Mammary epithelial cell (primary cell): ENCODE measurements at regions of chrX and their contacts with region 1.

Region 1: GRCh38 chrX:30889147-30890140 is at the start of gene TAB3:
- DNase-seq: peak; percentile 96
- H3K4me3 ChIP-seq: peak within 1 kb of the TSS; percentile 52 to 67 (median 65)
- H3K27ac ChIP-seq: peak within 1 kb of the TSS; percentile 83
- H3K4me1 ChIP-seq: peaks cover 39% of the 10 kb centered on the region
- H3K27me3 ChIP-seq: no peaks in the 10 kb centered on the region
- CTCF ChIP-seq: no peak
- total RNA-seq, gene TAB3: 34.1 to 55.5 TPM

Region 2: DNA sequence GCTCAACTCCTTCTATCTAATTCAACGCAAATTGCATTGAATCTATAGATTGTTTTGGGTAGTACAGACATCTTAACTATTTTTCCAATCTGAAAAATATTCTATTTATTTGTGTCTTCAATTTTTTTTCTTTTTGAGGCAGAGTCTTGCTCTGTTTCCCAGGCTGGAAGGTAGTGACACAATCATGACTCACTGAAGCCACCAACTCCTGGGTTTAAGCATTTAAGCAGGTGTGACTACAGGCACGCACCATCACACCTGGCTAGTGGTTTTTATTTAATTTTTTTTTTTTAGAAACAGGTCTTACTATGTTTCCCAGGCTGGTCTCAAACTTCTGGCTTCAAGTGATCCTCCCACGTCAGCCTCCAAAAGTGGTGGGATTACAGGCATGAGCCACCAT is 137.9 kb before region 1 on chrX:
- CTCF ChIA-PET with region 1: no interaction called
- dilution Hi-C with region 1: no loop called
- in situ Hi-C with region 1: no loop called
- intact Hi-C with region 1: loop called (anchors 1 kb)
- DNase-seq: peak; percentile 62
- H3K4me3 ChIP-seq: no peak overlapping the region
- H3K27ac ChIP-seq: no peak overlapping the region
- H3K4me1 ChIP-seq: no peaks in the 10 kb centered on the region
- H3K27me3 ChIP-seq: no peaks in the 10 kb centered on the region
- CTCF ChIP-seq: no peak

Region 3: GRCh38 chrX:30875961-30876360 is 13.5 kb before region 1 on chrX:
- CTCF ChIA-PET with region 1: no interaction called
- dilution Hi-C with region 1: no loop called
- in situ Hi-C with region 1: no loop called
- intact Hi-C with region 1: loop called (anchors 1 kb)
- DNase-seq: peak; percentile 90
- H3K4me3 ChIP-seq: peak overlapping the region in 1 of 3 experiments; percentile 10
- H3K27ac ChIP-seq: peak overlapping the region; percentile 96
- H3K4me1 ChIP-seq: peaks cover 32% of the 10 kb centered on the region
- H3K27me3 ChIP-seq: no peaks in the 10 kb centered on the region
- CTCF ChIP-seq: no peak

Region 4: GRCh38 chrX:30906726-30907125 is 17.3 kb after region 1 on chrX:
- CTCF ChIA-PET with region 1: no interaction called
- dilution Hi-C with region 1: no loop called
- in situ Hi-C with region 1: no loop called
- intact Hi-C with region 1: loop called (anchors 2 kb)
- DNase-seq: peak; percentile 82
- H3K4me3 ChIP-seq: no peak overlapping the region
- H3K27ac ChIP-seq: peak overlapping the region; percentile 52
- H3K4me1 ChIP-seq: peaks cover 33% of the 10 kb centered on the region
- H3K27me3 ChIP-seq: no peaks in the 10 kb centered on the region
- CTCF ChIP-seq: no peak

Region 5: GRCh38 chrX:30935985-30936384 is 46.5 kb after region 1 on chrX:
- CTCF ChIA-PET with region 1: no interaction called
- dilution Hi-C with region 1: no loop called
- in situ Hi-C with region 1: no loop called
- intact Hi-C with region 1: loop called (anchors 2 kb)
- DNase-seq: peak; percentile 19
- H3K4me3 ChIP-seq: no peak overlapping the region
- H3K27ac ChIP-seq: no peak overlapping the region
- H3K4me1 ChIP-seq: no peaks in the 10 kb centered on the region
- H3K27me3 ChIP-seq: no peaks in the 10 kb centered on the region
- CTCF ChIP-seq: peak; percentile 30 to 48

Region 6: GRCh38 chrX:30957753-30958152 is 68.3 kb after region 1 on chrX:
- CTCF ChIA-PET with region 1: no interaction called
- dilution Hi-C with region 1: no loop called
- in situ Hi-C with region 1: no loop called
- intact Hi-C with region 1: loop called (anchors 1 kb)
- DNase-seq: peak; percentile 5
- H3K4me3 ChIP-seq: no peak overlapping the region
- H3K27ac ChIP-seq: no peak overlapping the region
- H3K4me1 ChIP-seq: no peaks in the 10 kb centered on the region
- H3K27me3 ChIP-seq: no peaks in the 10 kb centered on the region
- CTCF ChIP-seq: no peak